Brain microvascular endothelial cell (primary cell): ENCODE measurements at regions of chr11 and their contacts with region 1.

Region 1: GRCh38 chr11:124402326-124402922 is 3.6 kb upstream of the OR8B3 start:
- DNase-seq: peak; percentile 89
- H3K4me3 ChIP-seq: no peak overlapping the region
- H3K27ac ChIP-seq: no peak overlapping the region
- H3K27me3 ChIP-seq: no peaks in the 10 kb centered on the region
- CTCF ChIP-seq: peak; percentile 88

Region 2: DNA sequence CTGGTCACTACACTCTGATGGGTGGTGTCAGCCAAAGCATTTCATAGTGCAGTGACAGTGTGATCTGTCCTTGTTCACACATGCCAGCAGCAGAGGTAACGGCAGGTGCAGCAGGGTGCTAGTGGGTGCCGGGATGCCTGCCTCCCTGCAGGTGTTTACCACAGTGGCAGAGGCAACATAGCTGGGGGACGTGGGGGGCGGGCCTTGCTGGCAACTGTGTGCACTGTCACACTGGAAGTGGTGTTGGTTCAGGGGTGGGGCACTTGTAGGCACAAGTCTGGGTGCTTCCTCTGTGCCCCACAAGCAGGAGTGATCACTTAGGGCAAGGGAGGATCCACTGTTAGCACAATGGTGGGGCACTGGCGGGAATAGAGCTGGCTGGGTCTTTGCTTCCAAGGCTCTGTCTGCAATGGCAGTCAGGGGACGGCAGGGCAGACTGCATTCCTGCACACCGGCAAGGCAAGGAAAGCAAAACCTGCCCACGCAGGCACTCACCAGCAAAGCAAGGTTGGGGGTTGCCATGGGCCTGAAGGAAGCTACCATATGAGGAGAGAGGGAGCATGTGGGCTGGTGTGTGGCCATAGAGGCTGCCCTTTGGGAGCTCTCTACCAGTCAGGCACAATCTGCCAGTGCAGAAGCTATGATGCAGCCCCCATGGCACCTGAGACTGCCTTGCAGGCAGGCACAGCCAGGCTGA is 107.7 kb after region 1 on chr11:
- in situ Hi-C with region 1: no loop called
- DNase-seq: no peak
- H3K4me3 ChIP-seq: no peak overlapping the region
- H3K27ac ChIP-seq: no peak overlapping the region
- H3K27me3 ChIP-seq: no peaks in the 10 kb centered on the region
- CTCF ChIP-seq: no peak

Region 3: GRCh38 chr11:124586238-124586860 is 183.9 kb after region 1 on chr11:
- in situ Hi-C with region 1: loop called (anchors 25 kb)
- DNase-seq: peak; percentile 68
- H3K4me3 ChIP-seq: no peak overlapping the region
- H3K27ac ChIP-seq: no peak overlapping the region
- H3K27me3 ChIP-seq: no peaks in the 10 kb centered on the region
- CTCF ChIP-seq: peak; percentile 81